ENCODE measurements at regions of chr7 and their contacts with region 1.

Region 1: GRCh38 chr7:151028131-151028947 is at the start of gene ABCB8:
- DNase-seq: peak; percentile 100
- CTCF ChIP-seq: peak; percentile 37

Region 2: GRCh38 chr7:151038951-151039849 is 10.9 kb after region 1 on chr7:
- CTCF ChIA-PET with region 1: interaction called, 10 read pairs
- POLR2A ChIA-PET with region 1: no interaction called
- DNase-seq: peak; percentile 54
- CTCF ChIP-seq: no peak

Region 3: GRCh38 chr7:151110941-151111645 is 82.8 kb after region 1 on chr7:
- CTCF ChIA-PET with region 1: interaction called, 18 read pairs
- POLR2A ChIA-PET with region 1: no interaction called
- DNase-seq: peak; percentile 92
- CTCF ChIP-seq: peak; percentile 94